CD8-positive, alpha-beta T cell (primary cell): ENCODE measurements at regions of chr5 and their contacts with region 1.

Region 1: DNA sequence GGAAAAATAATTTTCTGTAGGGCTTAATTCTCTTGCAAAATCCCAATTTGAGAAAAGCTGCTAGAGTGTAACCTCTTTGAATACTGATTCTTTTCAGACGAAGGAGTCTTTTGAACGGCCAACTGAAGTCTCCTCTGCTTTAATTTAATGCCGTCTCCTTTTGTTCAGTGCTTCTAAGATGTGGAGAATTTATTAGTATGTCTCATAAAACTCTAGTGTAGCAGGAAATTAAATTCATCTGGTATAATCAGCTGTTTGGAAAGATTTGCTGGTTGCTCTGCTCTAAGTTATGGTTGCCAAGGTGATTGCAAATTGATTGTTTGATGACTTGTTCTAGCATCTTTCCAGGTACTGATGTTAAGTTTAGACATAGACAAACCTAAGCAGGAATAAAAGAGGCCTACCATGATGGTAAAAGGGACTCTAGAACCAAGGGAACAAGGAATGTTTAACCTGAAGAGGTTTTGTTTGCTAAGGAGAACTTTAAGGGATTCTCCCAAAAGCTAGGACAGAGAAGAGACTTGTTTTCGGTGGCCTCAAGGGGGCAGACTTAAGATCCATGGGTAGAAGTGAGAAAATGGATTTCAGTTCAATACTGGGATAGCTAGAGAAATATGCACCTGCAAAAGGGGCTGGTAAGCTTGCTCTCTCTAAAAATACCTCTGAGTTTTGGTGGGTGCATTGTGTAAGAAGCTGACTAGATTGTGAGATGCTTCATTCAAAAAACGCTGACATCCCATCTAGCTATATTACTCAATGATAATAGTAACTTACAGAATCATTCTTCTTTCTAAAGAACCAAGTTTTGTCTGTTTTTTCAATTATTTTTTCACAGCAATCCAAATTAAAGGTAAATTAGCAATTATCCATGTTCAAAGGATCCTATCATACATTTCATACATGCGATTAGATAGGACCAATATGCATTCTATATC is 5.7 kb upstream of the ADRB2 start:
- DNase-seq: peak in 3 of 9 experiments; percentile 16 to 71 (median 63)
- ATAC-seq: no peak
- H3K4me3 ChIP-seq: no peak overlapping the region
- H3K4me3 Mint-ChIP-seq: no peak overlapping the region
- H3K27ac ChIP-seq: no peak overlapping the region
- H3K27ac Mint-ChIP-seq: no peak overlapping the region
- H3K4me1 ChIP-seq: peaks cover 4% of the 10 kb centered on the region
- H3K4me1 Mint-ChIP-seq: peaks cover 7% of the 10 kb centered on the region
- H3K27me3 ChIP-seq: no peaks in the 10 kb centered on the region
- H3K27me3 Mint-ChIP-seq: no peaks in the 10 kb centered on the region
- CTCF ChIP-seq: peak; percentile 44

Region 2: GRCh38 chr5:148687427-148687826 is 133.3 kb before region 1 on chr5:
- CTCF ChIA-PET with region 1: no interaction called
- POLR2A ChIA-PET with region 1: no interaction called
- intact Hi-C with region 1: no loop called
- DNase-seq: peak in 2 of 9 experiments; percentile 1 to 2
- ATAC-seq: no peak
- H3K4me3 ChIP-seq: no peak overlapping the region
- H3K4me3 Mint-ChIP-seq: no peak overlapping the region
- H3K27ac ChIP-seq: no peak overlapping the region
- H3K27ac Mint-ChIP-seq: no peak overlapping the region
- H3K4me1 ChIP-seq: no peaks in the 10 kb centered on the region
- H3K4me1 Mint-ChIP-seq: no peaks in the 10 kb centered on the region
- H3K27me3 ChIP-seq: no peaks in the 10 kb centered on the region
- H3K27me3 Mint-ChIP-seq: peaks cover 15% of the 10 kb centered on the region
- CTCF ChIP-seq: no peak

Region 3: GRCh38 chr5:148740966-148741742 is 79.6 kb before region 1 on chr5:
- CTCF ChIA-PET with region 1: interaction called, 11 read pairs
- POLR2A ChIA-PET with region 1: no interaction called
- intact Hi-C with region 1: no loop called
- DNase-seq: peak in 2 of 9 experiments; percentile 66 to 73
- ATAC-seq: peak; percentile 59
- H3K4me3 ChIP-seq: no peak overlapping the region
- H3K4me3 Mint-ChIP-seq: no peak overlapping the region
- H3K27ac ChIP-seq: no peak overlapping the region
- H3K27ac Mint-ChIP-seq: no peak overlapping the region
- H3K4me1 ChIP-seq: no peaks in the 10 kb centered on the region
- H3K4me1 Mint-ChIP-seq: no peaks in the 10 kb centered on the region
- H3K27me3 ChIP-seq: no peaks in the 10 kb centered on the region
- H3K27me3 Mint-ChIP-seq: peaks cover 25% of the 10 kb centered on the region
- CTCF ChIP-seq: peak; percentile 81

Region 4: GRCh38 chr5:148831590-148832565 is 11.2 kb after region 1 on chr5:
- CTCF ChIA-PET with region 1: interaction called, 21 read pairs
- POLR2A ChIA-PET with region 1: interaction called, 5 read pairs
- intact Hi-C with region 1: no loop called
- DNase-seq: peak in 1 of 9 experiments; percentile 27
- ATAC-seq: no peak
- H3K4me3 ChIP-seq: peak overlapping the region in 1 of 2 experiments; percentile 73
- H3K4me3 Mint-ChIP-seq: peak overlapping the region; percentile 74
- H3K27ac ChIP-seq: peak overlapping the region in 1 of 2 experiments; percentile 50
- H3K27ac Mint-ChIP-seq: peak overlapping the region; percentile 23
- H3K4me1 ChIP-seq: peaks cover 8% of the 10 kb centered on the region
- H3K4me1 Mint-ChIP-seq: peaks cover 75% of the 10 kb centered on the region
- H3K27me3 ChIP-seq: no peaks in the 10 kb centered on the region
- H3K27me3 Mint-ChIP-seq: no peaks in the 10 kb centered on the region
- CTCF ChIP-seq: no peak

Region 5: DNA sequence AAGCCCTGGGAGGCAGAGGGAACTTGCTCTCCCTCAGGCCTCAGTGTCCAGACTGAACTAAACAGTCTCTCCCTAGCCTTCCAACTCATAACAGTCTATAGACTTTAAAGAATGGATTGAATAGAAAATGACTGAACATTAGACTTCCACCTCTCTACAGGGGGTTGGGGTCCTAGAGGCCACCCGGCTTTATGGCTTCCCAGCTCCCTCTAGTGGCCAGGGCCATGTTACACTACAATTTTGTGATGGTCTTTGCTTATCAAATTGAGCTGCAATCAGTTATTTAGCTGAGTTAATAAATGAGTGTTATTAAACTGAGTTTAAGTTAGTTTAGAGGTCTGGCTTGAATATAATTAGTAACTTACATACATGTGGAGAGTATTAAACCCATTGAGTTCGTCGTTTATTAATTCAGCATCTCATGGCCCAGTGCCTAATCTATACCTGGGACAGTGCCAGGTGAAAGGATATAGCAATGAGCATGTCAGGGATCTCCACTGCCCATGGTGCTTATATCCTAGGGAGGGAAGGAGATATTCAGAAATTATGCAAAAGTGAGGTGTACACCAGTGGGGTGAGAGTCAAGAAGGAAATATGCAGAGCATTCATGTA is 137.0 kb after region 1 on chr5:
- CTCF ChIA-PET with region 1: interaction called, 54 read pairs
- POLR2A ChIA-PET with region 1: interaction called, 3 read pairs
- intact Hi-C with region 1: loop called (anchors 1 to 5 kb)
- DNase-seq: peak; percentile 15 to 69 (median 50)
- ATAC-seq: peak; percentile 58
- H3K4me3 ChIP-seq: no peak overlapping the region
- H3K4me3 Mint-ChIP-seq: no peak overlapping the region
- H3K27ac ChIP-seq: no peak overlapping the region
- H3K27ac Mint-ChIP-seq: no peak overlapping the region
- H3K4me1 ChIP-seq: no peaks in the 10 kb centered on the region
- H3K4me1 Mint-ChIP-seq: no peaks in the 10 kb centered on the region
- H3K27me3 ChIP-seq: no peaks in the 10 kb centered on the region
- H3K27me3 Mint-ChIP-seq: peaks cover 3% of the 10 kb centered on the region
- CTCF ChIP-seq: peak; percentile 90

Region 6: GRCh38 chr5:148998174-148998797 is 177.6 kb after region 1 on chr5:
- CTCF ChIA-PET with region 1: interaction called, 11 read pairs
- POLR2A ChIA-PET with region 1: no interaction called
- intact Hi-C with region 1: loop called (anchors 1 to 2 kb)
- DNase-seq: peak in 4 of 9 experiments; percentile 13 to 74 (median 52)
- ATAC-seq: peak; percentile 62
- H3K4me3 ChIP-seq: no peak overlapping the region
- H3K4me3 Mint-ChIP-seq: no peak overlapping the region
- H3K27ac ChIP-seq: no peak overlapping the region
- H3K27ac Mint-ChIP-seq: no peak overlapping the region
- H3K4me1 ChIP-seq: no peaks in the 10 kb centered on the region
- H3K4me1 Mint-ChIP-seq: peaks cover 2% of the 10 kb centered on the region
- H3K27me3 ChIP-seq: no peaks in the 10 kb centered on the region
- H3K27me3 Mint-ChIP-seq: peaks cover 23% of the 10 kb centered on the region
- CTCF ChIP-seq: peak; percentile 50